Right cardiac atrium (tissue), 5 donors: ENCODE measurements at regions of chr9 and their contacts with region 1.

Region 1: GRCh38 chr9:13992136-13993088 is 321.5 kb downstream of the NFIB start:
- DNase-seq: no peak
- ATAC-seq: peak; percentile 60 to 87
- H3K4me3 ChIP-seq: no peak overlapping the region
- H3K27ac ChIP-seq: no peak overlapping the region
- H3K4me1 ChIP-seq: no peaks in the 10 kb centered on the region
- H3K27me3 ChIP-seq: no peaks in the 10 kb centered on the region

Region 2: DNA sequence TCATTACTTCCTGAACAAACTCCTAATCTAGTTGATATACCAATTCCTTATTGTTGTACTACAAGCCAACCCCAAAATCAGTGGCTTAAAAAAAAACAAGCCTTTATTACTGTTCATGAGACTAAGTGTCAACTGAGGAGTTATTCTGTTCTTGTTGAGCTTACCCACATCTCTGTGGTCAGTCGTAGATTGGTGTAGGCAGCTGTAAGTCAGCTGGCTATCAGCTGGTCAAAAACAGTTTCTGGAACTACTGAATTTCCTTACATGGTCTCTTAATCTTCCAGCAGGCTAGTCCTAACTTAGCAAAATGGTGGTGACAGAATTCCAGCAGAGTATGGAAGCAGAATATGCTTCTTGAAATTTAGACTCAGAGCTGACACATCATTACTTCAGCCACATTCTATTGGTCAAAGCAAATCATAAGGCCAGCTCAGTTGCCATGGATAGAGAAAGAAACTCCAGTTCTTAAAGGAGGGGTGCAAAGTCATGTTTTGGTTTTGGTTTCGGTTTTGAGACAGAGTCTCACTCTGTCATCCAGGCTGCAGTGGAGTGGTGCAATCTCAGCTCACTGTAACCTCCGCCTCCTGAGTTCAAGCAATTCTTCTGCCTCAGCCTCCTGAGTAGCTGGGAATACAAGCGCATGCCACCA is 326.9 kb before region 1 on chr9:
- intact Hi-C with region 1: no loop called
- DNase-seq: no peak
- ATAC-seq: peak; percentile 59 to 88
- H3K4me3 ChIP-seq: no peak overlapping the region
- H3K27ac ChIP-seq: no peak overlapping the region
- H3K4me1 ChIP-seq: no peaks in the 10 kb centered on the region
- H3K27me3 ChIP-seq: no peaks in the 10 kb centered on the region

Region 3: GRCh38 chr9:13939134-13939533 is 53.3 kb before region 1 on chr9:
- intact Hi-C with region 1: loop called in 1 of 4 experiments (anchors 10 kb)
- DNase-seq: no peak
- ATAC-seq: peak; percentile 87 to 91
- H3K4me3 ChIP-seq: no peak overlapping the region
- H3K27ac ChIP-seq: peak overlapping the region; percentile 70
- H3K4me1 ChIP-seq: peaks cover 3% of the 10 kb centered on the region
- H3K27me3 ChIP-seq: no peaks in the 10 kb centered on the region